AG04450 (cell line): ENCODE measurements at regions of chr19 and their contacts with region 1.

Region 1: GRCh38 chr19:40690693-40691420 is 406 bp upstream of the NUMBL start:
- DNase-seq: peak; percentile 78
- H3K4me3 ChIP-seq: peak overlapping the region; percentile 95
- H3K27ac ChIP-seq: peak overlapping the region; percentile 96
- H3K27me3 ChIP-seq: no peaks in the 10 kb centered on the region
- CTCF ChIP-seq: no peak

Region 2: GRCh38 chr19:40674291-40674690 is 16.6 kb before region 1 on chr19:
- CTCF ChIA-PET with region 1: no interaction called
- POLR2A ChIA-PET with region 1: no interaction called
- DNase-seq: no peak
- H3K4me3 ChIP-seq: no peak overlapping the region
- H3K27ac ChIP-seq: no peak overlapping the region
- H3K27me3 ChIP-seq: no peaks in the 10 kb centered on the region
- CTCF ChIP-seq: no peak

Region 3: GRCh38 chr19:40716655-40717324 is 25.9 kb after region 1 on chr19 and contains the starts of genes COQ8B and ITPKC:
- CTCF ChIA-PET with region 1: no interaction called
- POLR2A ChIA-PET with region 1: interaction called, 17 read pairs
- DNase-seq: peak; percentile 91
- H3K4me3 ChIP-seq: peak within 1 kb of the TSS; percentile 89
- H3K27ac ChIP-seq: peak within 1 kb of the TSS; percentile 100
- H3K27me3 ChIP-seq: no peaks in the 10 kb centered on the region
- CTCF ChIP-seq: no peak
- polyA plus RNA-seq, gene COQ8B: 16.0 and 20.2 TPM in 2 replicates
- polyA plus RNA-seq, gene ITPKC: 8.9 and 11.6 TPM in 2 replicates